Dendritic cell treated with granulocyte-macrophage colony-stimulating factor and Interleukin-4, amounts not matched to agents 40 ng/mL and 50 ng/mL, for 4 days (primary cell): ENCODE measurements at regions of chr4 and their contacts with region 1.

Region 1: GRCh38 chr4:170138580-170139194 is 48.9 kb upstream of the AADAT start:
- H3K4me3 Mint-ChIP-seq: no peak overlapping the region
- H3K27ac Mint-ChIP-seq: no peak overlapping the region
- H3K4me1 Mint-ChIP-seq: peaks cover 8% of the 10 kb centered on the region
- H3K27me3 Mint-ChIP-seq: no peaks in the 10 kb centered on the region

Region 2: GRCh38 chr4:170853422-170854021 is 714.8 kb after region 1 on chr4:
- intact Hi-C with region 1: loop called (anchors 5 kb)
- H3K4me3 Mint-ChIP-seq: no peak overlapping the region
- H3K27ac Mint-ChIP-seq: no peak overlapping the region
- H3K4me1 Mint-ChIP-seq: no peaks in the 10 kb centered on the region
- H3K27me3 Mint-ChIP-seq: no peaks in the 10 kb centered on the region